Common myeloid progenitor, CD34-positive (primary cell): ENCODE measurements at regions of chr17 and their contacts with region 1.

Region 1: DNA sequence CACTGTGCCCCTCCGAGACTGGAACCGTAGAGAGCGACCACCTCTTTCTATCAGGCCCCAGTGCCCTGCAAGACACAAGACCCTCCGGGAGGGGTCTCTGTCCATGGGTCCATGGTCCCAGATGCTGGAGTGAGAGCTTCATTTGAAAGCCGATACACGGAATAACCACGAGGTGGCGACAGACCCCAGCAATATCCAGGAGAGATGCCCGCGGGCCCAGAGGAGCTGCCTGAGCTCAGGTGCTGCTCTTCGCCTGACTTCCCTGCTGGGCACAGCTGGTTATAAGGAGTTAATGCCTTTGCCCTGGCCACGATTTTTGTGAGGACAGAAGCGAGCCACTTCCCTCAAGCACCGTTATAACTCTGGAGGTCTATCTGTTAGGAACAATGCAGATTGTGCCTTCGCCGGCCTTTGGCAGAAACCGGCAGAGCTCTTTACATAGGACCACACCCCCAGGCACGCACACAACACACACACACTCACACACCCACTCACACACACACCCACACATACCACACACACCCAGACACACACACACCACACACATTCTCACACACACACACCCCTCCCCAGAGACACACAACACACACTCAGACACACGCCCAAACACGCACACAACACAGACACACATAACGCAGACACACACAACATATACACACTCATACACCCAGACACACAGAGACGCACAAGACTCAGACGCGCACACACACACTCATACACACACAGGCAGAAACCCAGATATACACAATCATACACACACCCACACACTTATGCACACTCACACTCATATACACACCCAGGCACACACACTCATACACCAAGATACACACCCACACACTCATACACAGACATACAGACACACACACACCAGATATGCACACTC is 436.4 kb downstream of the SOX9 start:
- DNase-seq: peak; percentile 69 to 77 (median 72)
- H3K4me3 ChIP-seq: no peak overlapping the region
- H3K27ac ChIP-seq: no peak overlapping the region
- H3K4me1 ChIP-seq: peaks cover 0 to 3% (median under 1%) of the 10 kb centered on the region in 4 experiments
- H3K27me3 ChIP-seq: no peaks in the 10 kb centered on the region

Region 2: DNA sequence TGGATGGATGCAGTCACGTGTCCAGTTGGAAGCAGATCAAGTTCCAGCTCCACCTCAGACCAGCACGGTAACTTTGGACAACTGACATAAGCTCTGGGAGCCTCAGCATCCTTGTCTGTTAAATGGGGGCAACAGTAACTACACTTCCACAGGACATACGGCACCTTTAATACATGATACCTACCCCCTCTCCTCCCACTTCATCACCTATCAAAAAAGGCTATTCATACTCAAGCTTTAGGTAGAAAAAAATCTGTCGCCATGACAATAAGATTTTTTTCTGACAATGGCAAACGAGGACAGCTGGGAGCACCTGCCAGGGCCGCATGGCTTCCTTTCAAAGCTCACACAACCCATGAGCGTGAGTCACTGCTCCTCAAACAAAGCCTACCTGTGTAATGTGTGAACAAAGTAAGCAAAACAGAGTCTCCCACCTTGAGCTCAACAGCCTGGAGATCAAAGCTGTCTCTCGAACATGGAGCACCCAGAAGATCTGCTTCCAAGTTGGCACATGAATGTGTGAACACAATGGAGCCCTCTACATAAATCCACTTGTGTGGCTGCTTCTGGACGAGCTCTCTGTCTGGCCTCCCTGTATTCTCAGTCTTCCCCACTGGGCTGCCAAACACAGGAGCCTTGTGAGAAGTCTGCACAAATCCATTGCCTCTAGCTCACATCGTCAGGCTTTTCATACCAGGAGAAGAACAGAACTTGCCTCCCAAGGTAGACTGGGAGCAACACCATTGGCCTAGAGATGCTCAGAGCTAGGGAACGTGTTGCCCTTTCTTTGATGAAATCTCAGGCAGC is 23.3 kb after region 1 on chr17:
- CTCF ChIA-PET with region 1: interaction called, 12 read pairs
- POLR2A ChIA-PET with region 1: no interaction called
- DNase-seq: no peak
- H3K4me3 ChIP-seq: no peak overlapping the region
- H3K27ac ChIP-seq: no peak overlapping the region
- H3K4me1 ChIP-seq: no peaks in the 10 kb centered on the region
- H3K27me3 ChIP-seq: peaks cover 1 to 35% (median 6%) of the 10 kb centered on the region in 5 experiments

Region 3: GRCh38 chr17:72719578-72720493 is 162.7 kb after region 1 on chr17:
- CTCF ChIA-PET with region 1: interaction called, 101 read pairs
- POLR2A ChIA-PET with region 1: no interaction called
- DNase-seq: peak; percentile 91 to 94 (median 93)
- H3K4me3 ChIP-seq: peak overlapping the region in 6 of 7 experiments; percentile 10 to 70 (median 36)
- H3K27ac ChIP-seq: peak overlapping the region in 1 of 2 experiments; percentile 49
- H3K4me1 ChIP-seq: peaks cover 2 to 43% (median 20%) of the 10 kb centered on the region in 4 experiments
- H3K27me3 ChIP-seq: no peaks in the 10 kb centered on the region